Astrocyte of the cerebellum (primary cell): ENCODE measurements at regions of chr10 and their contacts with region 1.

Region 1: DNA sequence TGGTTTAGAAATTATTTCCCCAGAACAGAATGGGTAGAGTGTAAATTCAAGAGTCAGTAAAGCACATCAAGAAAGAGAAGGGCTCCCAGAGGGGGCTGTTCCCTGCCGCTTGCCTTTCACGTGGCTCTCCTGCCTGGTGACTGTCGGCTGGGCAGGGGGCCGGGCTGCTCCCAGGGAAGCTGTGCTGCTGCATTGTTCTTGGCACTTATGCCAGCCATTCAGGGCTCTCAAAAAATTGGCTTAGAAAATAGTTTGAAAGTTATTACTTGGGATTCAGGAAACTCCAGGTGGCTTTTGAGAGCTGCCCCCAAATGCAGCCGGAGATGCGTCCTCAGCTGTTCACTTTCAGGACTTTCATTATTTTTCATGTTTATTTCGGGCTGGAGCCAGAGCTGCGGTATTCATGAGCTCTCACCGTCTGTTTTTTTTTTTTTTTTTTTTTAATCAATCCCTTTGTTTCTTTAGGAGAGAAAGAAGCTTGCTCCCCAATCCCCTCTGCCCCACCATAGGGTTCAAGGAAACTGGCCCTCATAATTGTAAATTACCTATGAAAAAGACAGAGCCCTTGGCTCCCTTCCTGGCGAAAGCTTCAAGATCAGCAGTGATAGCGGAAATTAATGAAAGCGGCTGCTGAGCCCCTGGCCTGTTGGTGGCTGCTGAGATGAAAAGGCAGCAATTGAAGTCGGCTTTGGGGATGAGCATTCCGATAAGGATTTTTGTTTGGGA is 94.1 kb downstream of the SORCS3 start:
- DNase-seq: no peak
- H3K4me3 ChIP-seq: no peak overlapping the region
- CTCF ChIP-seq: no peak

Region 2: GRCh38 chr10:104690959-104691358 is 44.2 kb before region 1 on chr10:
- in situ Hi-C with region 1: loop called (anchors 5 kb)
- DNase-seq: no peak
- H3K4me3 ChIP-seq: no peak overlapping the region
- CTCF ChIP-seq: no peak